Activated B cell treated with CpG ODN at 0.5 μM for 24 hours (primary cell): ENCODE measurements at regions of chr12 and their contacts with region 1.

Region 1: GRCh38 chr12:47963340-47964040 is at the start of gene TMEM106C:
- DNase-seq: peak; percentile 89
- ATAC-seq: peak; percentile 96
- H3K4me3 Mint-ChIP-seq: peak within 1 kb of the TSS; percentile 97
- H3K27ac Mint-ChIP-seq: peak within 1 kb of the TSS; percentile 86
- H3K4me1 Mint-ChIP-seq: peaks cover 18% of the 10 kb centered on the region
- H3K27me3 Mint-ChIP-seq: peaks cover 11% of the 10 kb centered on the region
- CTCF ChIP-seq: peak; percentile 37
- total RNA-seq, gene TMEM106C: 24.5 and 31.3 TPM in 2 replicates

Region 2: GRCh38 chr12:46276756-46277155 is 1686.7 kb before region 1 on chr12:
- CTCF ChIA-PET with region 1: no interaction called
- POLR2A ChIA-PET with region 1: no interaction called
- intact Hi-C with region 1: no loop called
- DNase-seq: no peak
- ATAC-seq: no peak
- H3K4me3 Mint-ChIP-seq: no peak overlapping the region
- H3K27ac Mint-ChIP-seq: no peak overlapping the region
- H3K4me1 Mint-ChIP-seq: peaks cover 1% of the 10 kb centered on the region
- H3K27me3 Mint-ChIP-seq: no peaks in the 10 kb centered on the region
- CTCF ChIP-seq: no peak

Region 3: GRCh38 chr12:47797441-47797840 is 166.0 kb before region 1 on chr12:
- CTCF ChIA-PET with region 1: interaction called, 6 read pairs
- POLR2A ChIA-PET with region 1: no interaction called
- intact Hi-C with region 1: loop called (anchors 2 kb)
- DNase-seq: peak; percentile 46
- ATAC-seq: peak; percentile 91
- H3K4me3 Mint-ChIP-seq: no peak overlapping the region
- H3K27ac Mint-ChIP-seq: peak overlapping the region; percentile 80
- H3K4me1 Mint-ChIP-seq: peaks cover 23% of the 10 kb centered on the region
- H3K27me3 Mint-ChIP-seq: no peaks in the 10 kb centered on the region
- CTCF ChIP-seq: no peak

Region 4: GRCh38 chr12:47990351-47991105 is 27.0 kb after region 1 on chr12:
- CTCF ChIA-PET with region 1: no interaction called
- POLR2A ChIA-PET with region 1: no interaction called
- intact Hi-C with region 1: loop called (anchors 1 kb)
- DNase-seq: peak; percentile 29
- ATAC-seq: peak; percentile 99
- H3K4me3 Mint-ChIP-seq: no peak overlapping the region
- H3K27ac Mint-ChIP-seq: peak overlapping the region; percentile 78
- H3K4me1 Mint-ChIP-seq: peaks cover 34% of the 10 kb centered on the region
- H3K27me3 Mint-ChIP-seq: peaks cover 17% of the 10 kb centered on the region
- CTCF ChIP-seq: no peak

Region 5: DNA sequence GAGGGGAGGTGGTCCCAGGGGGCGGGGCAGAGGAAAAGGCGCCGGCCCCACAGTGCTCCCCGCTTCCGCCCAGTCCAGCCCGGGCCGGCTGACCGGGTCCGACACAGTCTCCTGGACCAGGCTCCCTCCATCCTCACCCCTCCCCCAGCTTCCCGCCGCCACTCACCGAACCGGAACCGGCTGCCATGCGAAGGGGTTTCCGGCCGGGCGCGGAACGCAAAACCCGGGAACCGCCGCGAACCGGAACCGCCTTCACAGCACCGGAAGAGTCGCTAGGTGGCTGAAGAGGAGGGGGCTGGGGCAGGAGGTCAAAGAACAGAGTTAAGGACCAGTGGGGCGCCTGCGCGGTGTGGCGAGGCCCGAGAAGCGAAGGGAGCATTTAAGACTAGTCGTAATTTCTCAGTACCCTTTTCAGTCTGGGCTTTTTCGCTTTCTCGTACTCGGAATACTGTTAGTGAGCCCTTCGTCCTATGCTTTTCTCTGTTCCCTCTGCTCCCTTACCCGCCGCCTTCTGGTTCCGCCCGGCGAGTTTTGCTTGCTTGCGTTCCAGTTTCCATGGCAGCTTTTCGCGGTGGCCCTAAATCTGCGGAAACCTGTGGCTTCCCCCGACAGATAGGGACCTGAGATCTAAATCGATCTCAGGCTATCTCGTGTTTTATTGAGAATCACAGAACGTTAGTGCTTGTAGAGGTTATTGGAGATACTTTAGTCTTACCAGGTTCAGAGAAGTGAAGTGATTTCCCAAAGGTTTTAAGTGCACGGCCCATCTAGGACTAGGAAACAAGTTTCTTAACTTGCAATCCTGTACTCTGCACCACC is 142.6 kb after region 1 on chr12 and contains the start of gene SENP1:
- CTCF ChIA-PET with region 1: no interaction called
- POLR2A ChIA-PET with region 1: no interaction called
- intact Hi-C with region 1: loop called (anchors 5 kb)
- DNase-seq: peak; percentile 87
- ATAC-seq: peak; percentile 78
- H3K4me3 Mint-ChIP-seq: peak within 1 kb of the TSS; percentile 95
- H3K27ac Mint-ChIP-seq: peak within 1 kb of the TSS; percentile 98
- H3K4me1 Mint-ChIP-seq: peaks cover 49% of the 10 kb centered on the region
- H3K27me3 Mint-ChIP-seq: no peaks in the 10 kb centered on the region
- CTCF ChIP-seq: no peak
- total RNA-seq, gene SENP1: 42.8 and 43.2 TPM in 2 replicates

Region 6: DNA sequence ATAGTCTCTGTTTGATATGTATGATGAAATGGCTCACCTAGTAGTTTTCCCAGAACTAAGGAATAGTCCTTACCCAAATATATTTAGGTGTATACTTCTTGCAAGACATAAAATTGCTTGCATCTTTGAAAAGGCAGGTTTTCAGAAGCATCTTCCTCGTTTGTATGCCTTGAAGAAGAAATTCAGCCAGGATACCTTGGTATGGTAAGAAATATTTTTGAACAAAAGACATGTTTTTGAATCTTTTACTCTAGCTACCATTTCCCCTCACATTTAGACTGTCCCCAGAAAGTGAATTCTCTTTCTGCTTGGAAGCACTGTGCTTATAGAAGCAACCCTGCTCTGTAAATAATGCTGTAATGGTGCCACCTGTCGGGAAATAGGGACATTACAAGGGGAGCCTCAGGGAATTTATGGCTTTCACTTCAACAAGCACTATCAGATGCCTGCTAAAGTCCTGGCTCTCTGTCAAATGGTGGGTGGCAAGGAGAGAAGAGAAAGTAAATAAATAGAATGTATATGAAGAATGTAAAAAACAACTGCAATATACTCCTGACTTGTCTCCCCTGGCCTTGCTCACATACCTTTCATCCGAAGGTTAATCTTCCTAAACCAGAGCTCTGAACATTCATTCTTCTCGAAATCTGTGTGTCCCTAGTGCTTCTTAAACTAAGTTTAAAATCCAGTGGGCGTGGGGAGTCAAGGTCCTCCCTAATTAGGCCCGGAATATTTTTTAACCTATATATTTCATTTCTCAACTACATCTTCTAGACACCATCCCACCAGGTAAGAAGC is 226.0 kb after region 1 on chr12:
- CTCF ChIA-PET with region 1: no interaction called
- POLR2A ChIA-PET with region 1: no interaction called
- intact Hi-C with region 1: loop called (anchors 2 kb)
- DNase-seq: peak; percentile 38
- ATAC-seq: peak; percentile 84
- H3K4me3 Mint-ChIP-seq: no peak overlapping the region
- H3K27ac Mint-ChIP-seq: no peak overlapping the region
- H3K4me1 Mint-ChIP-seq: peaks cover 17% of the 10 kb centered on the region
- H3K27me3 Mint-ChIP-seq: peaks cover 23% of the 10 kb centered on the region
- CTCF ChIP-seq: no peak

Region 7: GRCh38 chr12:48618541-48618940 is 655.1 kb after region 1 on chr12:
- CTCF ChIA-PET with region 1: no interaction called
- POLR2A ChIA-PET with region 1: no interaction called
- intact Hi-C with region 1: loop called (anchors 5 kb)
- DNase-seq: peak; percentile 27
- ATAC-seq: peak; percentile 79
- H3K4me3 Mint-ChIP-seq: no peak overlapping the region
- H3K27ac Mint-ChIP-seq: no peak overlapping the region
- H3K4me1 Mint-ChIP-seq: no peaks in the 10 kb centered on the region
- H3K27me3 Mint-ChIP-seq: peaks cover 23% of the 10 kb centered on the region
- CTCF ChIP-seq: peak; percentile 90